Gastrocnemius medialis (tissue), 4 donors: ENCODE measurements at regions of chr3 and their contacts with region 1.

Region 1: DNA sequence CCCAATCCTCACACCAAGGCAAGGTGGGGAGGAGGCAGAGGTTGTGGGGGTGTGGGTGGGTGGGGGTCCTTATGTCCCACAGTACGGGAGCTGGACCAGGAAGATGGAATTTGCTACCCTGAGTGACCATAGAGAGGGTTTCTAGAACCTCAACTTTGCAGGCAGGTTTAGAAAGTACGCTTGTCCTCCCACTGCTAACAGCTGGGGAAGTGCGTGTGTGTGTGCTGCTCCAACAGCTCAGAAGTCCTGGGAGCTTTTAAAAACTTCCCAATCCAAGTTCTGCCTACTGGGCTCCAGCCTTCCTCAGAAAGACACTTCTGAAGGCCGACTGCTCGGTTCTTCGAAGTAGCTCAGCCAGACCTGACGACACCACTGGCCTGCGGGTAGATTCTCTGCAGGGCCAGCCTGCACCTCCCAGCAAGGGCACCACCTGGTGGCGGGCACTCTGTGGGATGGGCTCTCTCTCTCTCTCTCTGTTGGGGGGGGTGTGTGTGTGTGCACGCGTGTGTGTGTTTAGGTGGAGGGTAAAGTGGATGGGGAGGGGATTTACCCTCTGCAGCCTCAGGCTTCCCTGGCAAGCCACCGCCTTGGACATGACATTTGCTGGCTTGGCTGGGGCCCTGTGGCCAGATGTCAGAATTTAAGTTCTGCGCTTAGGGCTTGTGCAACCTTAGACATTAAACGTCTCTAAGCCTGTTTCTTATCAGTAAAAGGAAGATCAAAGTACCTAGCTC is 15.6 kb downstream of the TMEM158 start:
- DNase-seq: peak; percentile 74 to 80
- ATAC-seq: peak; percentile 94
- H3K4me3 ChIP-seq: no peak overlapping the region
- H3K27ac ChIP-seq: no peak overlapping the region
- H3K4me1 ChIP-seq: peaks cover 7 to 8% of the 10 kb centered on the region in 2 donors
- H3K27me3 ChIP-seq: no peaks in the 10 kb centered on the region
- CTCF ChIP-seq: peak; percentile 87 to 94 (median 88)
- POLR2A ChIP-seq: no peak

Region 2: GRCh38 chr3:45043728-45044299 is 166.7 kb before region 1 on chr3:
- in situ Hi-C with region 1: loop called in 3 of 4 experiments (anchors 5 kb)
- intact Hi-C with region 1: no loop called
- DNase-seq: no peak
- ATAC-seq: no peak
- H3K4me3 ChIP-seq: no peak overlapping the region
- H3K27ac ChIP-seq: no peak overlapping the region
- H3K4me1 ChIP-seq: peaks cover 0 to 18% of the 10 kb centered on the region in 2 donors
- H3K27me3 ChIP-seq: no peaks in the 10 kb centered on the region
- CTCF ChIP-seq: no peak
- POLR2A ChIP-seq: no peak

Region 3: DNA sequence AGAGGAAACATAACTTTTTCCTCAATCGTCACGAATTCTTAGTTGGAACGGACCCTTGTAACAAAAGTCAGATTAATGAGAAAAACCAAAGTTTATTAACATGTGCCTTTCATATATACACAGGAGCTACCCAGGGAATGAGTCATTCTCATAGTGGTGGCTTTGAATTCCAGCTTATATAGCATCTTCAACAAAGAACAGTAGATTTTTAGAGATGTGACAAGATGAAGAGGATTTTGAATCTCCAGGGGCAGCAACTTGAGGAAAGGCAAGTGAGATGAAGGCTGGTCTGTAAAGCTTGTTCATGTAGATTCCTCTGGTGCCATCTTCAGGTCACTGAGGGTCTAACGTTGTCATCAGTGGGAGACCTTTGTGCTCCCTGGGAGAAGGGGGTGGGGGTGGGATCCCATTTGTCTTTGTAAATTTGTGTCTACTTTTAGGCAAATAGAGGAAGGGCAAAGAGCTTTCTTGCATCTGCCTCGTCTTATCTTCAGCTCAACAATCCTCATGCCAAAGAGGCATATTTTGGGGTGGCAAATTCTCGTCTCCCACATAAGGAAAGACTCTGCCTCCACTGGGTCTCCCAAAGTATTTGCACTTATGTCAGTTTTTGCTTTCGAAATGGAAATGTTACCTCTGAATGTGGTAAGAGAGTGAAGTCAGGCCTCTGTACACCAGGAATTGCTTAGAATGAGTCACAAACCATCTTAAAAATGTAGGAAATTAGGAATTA is 154.9 kb before region 1 on chr3:
- in situ Hi-C with region 1: no loop called
- intact Hi-C with region 1: loop called (anchors 5 kb)
- DNase-seq: no peak
- ATAC-seq: peak in 1 of 2 donors; percentile 49
- H3K4me3 ChIP-seq: no peak overlapping the region
- H3K27ac ChIP-seq: peak overlapping the region in 3 of 4 donors; percentile 31 to 86 (median 74)
- H3K4me1 ChIP-seq: peaks cover 28 to 37% of the 10 kb centered on the region in 2 donors
- H3K27me3 ChIP-seq: no peaks in the 10 kb centered on the region
- CTCF ChIP-seq: peak in 2 of 5 experiments; percentile 25 to 39
- POLR2A ChIP-seq: no peak

Region 4: DNA sequence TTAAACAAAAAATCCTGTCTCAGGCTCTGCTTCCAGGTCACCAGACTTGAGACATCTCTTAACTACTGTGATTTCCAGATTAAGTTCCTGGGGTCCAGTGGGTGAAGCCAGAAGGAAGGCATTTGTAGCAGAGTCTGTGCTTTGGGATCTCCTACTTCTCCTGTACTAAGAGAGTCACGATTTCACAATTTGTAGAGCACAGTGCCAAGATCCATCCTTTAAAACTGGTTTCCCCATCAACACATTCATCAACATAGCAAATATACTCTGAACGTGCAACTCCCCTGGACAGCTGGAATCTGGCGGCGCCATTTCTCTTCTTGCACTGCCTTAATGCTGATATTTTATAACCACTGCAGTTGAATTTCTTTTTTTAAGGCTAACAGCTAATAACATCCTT is 97.5 kb before region 1 on chr3:
- in situ Hi-C with region 1: no loop called
- intact Hi-C with region 1: no loop called
- DNase-seq: peak in 1 of 2 donors; percentile 32
- ATAC-seq: peak; percentile 68 to 70
- H3K4me3 ChIP-seq: no peak overlapping the region
- H3K27ac ChIP-seq: peak overlapping the region; percentile 80 to 92 (median 90)
- H3K4me1 ChIP-seq: peaks cover 20 to 26% of the 10 kb centered on the region in 2 donors
- H3K27me3 ChIP-seq: no peaks in the 10 kb centered on the region
- CTCF ChIP-seq: no peak
- POLR2A ChIP-seq: no peak